Dendritic cell treated with granulocyte-macrophage colony-stimulating factor and Interleukin-4, amounts not matched to agents 40 ng/mL and 50 ng/mL, for 4 days (primary cell): ENCODE measurements at regions of chr20 and their contacts with region 1.

Region 1: DNA sequence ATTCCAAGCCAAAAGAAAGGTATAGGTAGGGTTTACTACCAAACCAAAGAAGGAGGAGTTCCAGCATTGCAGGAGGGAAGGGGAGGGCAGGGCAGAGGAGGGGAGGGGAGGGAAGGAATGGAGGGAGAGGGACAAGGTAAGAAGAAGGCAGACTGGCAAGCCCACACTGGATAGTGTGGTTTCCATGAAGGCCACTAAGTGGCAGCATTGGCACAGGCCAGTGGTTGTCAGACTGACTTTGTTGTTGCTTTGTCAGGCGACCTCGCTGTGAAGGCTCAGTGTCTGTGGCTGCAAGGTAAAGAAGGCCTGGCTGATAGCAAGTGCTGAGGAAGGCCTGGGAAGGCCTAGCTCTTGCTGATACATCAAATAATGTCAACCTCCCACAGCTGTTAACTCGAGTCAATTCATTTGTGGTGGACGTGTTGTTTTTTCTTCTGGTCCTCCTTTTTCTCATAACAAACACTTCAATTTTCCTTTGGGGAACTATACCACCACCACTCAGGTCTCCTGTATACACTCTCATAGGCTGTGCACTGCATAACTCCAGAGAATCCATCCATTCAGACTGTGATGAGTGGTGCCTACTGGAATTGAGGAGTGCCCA is 7.7 kb upstream of the ZNF334 start:
- H3K4me3 Mint-ChIP-seq: no peak overlapping the region
- H3K27ac Mint-ChIP-seq: no peak overlapping the region
- H3K4me1 Mint-ChIP-seq: no peaks in the 10 kb centered on the region
- H3K27me3 Mint-ChIP-seq: peaks cover 18% of the 10 kb centered on the region

Region 2: DNA sequence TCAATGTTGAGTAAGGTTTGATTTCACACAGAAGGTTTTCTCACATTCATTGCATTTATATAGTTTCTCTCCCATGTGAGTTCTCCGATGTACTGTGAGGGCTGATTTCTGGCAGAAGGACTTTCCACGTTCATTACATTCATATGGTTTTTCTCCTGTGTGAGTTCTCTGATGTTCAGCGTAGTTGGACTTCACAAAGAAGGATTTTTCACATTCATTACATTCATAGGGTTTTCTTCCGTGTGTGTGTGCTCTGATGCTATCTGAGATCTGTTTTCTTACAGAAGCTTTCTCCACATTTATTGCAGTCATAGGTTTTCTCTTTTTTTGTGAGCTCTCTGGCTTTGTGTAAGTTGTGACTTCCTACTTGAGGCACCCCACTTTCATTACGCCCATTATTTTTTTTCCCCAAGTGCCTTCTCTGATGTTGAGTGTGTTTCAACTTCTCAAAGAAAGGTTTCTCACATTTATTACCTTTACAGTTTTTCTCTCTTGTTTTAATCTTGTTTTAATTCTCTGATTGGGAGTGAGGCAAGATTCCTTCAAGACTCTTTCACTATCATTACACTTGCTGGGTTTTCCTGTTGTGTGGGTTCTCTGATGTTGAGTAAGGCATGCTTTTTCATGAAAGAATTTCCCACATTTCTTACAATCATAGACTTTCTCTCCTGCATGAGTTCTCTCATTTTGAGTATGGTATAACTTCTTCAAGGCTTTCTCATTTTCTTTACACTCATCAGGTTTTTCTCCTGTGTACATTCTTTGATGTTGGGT is 64.6 kb before region 1 on chr20:
- intact Hi-C with region 1: no loop called
- H3K4me3 Mint-ChIP-seq: no peak overlapping the region
- H3K27ac Mint-ChIP-seq: no peak overlapping the region
- H3K4me1 Mint-ChIP-seq: peaks cover 6% of the 10 kb centered on the region
- H3K27me3 Mint-ChIP-seq: peaks cover 27% of the 10 kb centered on the region

Region 3: DNA sequence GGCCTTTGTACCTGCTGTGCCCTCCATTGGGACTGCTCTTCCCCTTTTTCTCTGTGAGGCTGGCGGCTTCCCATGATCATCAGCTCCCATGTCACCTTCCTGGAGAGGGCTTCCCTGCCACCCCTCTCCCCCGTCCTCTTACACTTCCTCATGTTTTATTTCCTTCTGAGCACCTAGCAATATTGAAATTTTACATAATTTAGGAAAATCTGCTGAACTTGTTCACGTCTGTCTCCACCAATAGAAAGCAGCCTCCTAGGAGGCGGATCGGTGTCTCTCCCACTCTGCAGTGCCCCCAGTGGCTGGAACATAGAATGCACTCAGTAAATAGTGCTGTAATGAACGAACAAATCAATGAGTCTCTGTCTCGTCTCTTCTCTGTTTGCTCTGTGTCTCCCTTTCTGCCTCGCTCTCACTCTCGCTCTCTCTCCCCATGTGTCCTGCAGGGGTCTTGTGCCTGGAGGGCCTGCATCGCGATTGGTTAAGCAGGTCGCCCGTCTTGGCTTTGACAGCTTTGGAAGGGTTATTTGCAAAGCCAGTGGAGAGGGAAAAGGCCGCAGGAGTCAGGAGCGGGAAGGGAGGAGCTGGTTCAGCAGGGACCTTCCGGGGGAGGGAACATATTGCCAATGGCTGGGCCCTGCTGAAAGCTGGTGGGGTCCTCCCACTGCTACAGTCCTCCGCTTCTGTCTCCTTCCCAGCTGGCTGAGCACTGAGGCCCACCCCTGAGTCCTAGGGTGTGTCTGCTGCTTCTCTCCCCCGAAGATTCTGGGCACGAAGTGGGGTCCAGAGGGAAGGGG is 41.5 kb after region 1 on chr20:
- intact Hi-C with region 1: loop called (anchors 1 kb)
- H3K4me3 Mint-ChIP-seq: no peak overlapping the region
- H3K27ac Mint-ChIP-seq: no peak overlapping the region
- H3K4me1 Mint-ChIP-seq: peaks cover 18% of the 10 kb centered on the region
- H3K27me3 Mint-ChIP-seq: peaks cover 13% of the 10 kb centered on the region

Region 4: DNA sequence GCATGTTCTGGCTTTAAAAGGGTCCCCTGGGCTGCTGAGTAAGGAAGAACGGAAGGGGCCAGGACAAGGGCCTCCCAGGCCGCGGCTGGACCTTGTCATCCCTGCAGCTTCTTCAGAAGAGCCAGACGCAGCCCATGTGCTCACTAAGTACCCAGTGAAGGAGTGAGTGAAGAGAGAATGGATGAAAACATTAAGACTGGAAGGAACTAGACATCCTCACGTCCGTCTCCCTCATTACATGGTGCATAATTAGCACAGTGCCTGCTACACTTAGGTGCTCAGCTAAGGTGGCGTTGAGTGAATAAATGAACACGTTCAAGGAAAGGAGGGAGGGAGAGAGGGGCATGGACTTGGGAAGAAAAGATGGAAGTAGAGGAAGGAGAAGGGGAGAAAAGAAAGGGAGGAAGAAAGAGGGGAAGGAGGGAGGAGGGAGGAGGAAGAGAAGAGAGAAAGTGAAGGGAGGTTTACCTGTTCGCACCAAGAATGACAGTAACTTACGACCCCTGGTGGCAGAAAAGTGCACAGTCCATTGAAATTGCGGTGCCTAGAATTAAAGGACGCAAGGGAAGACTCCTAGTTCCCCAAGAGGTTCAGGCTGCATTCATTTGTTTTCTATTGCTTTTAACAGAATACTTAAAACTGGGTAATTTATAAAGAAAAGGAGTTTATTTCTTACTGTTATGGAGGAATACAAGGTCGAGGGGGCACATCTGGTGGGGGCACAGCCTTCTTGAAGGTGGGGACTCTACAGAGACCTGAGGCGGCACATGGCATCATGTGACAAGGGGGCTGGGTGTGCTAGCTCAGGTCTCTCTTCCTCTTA is 160.2 kb after region 1 on chr20:
- intact Hi-C with region 1: loop called (anchors 1 kb)
- H3K4me3 Mint-ChIP-seq: no peak overlapping the region
- H3K27ac Mint-ChIP-seq: no peak overlapping the region
- H3K4me1 Mint-ChIP-seq: peaks cover 38% of the 10 kb centered on the region
- H3K27me3 Mint-ChIP-seq: peaks cover 1% of the 10 kb centered on the region

Region 5: DNA sequence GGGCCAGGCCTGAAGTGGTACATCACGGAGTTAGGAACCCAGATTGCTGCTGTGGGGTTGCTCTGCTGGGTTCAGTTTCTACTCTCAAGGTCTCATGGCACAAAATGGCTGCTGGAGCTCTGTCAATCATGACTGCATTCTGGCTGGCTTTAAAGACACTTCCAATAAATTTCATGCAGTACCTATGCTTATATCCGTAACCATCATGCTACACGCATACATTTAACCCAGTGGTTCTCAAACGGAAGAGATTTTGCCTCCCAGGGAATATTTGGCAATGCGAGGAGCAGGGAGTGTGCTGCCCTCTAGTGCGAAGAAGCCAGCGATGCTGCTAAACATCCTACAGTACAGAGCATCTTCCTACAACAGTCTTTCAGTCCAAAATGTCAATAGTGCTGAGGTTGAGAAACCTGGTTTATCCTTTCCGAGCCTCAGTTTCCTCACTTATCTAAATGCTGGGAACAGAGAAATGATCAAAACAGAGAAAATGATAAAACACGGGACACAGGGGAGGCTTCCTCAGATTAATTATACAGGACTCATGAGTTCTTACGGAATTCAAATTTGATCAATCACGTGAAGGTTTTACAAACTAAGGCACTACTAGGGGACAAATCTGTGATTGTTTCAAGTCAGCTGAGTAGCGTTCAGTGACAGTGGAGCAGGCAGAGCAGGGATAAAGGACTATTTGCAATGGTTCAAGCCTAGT is 178.7 kb after region 1 on chr20:
- intact Hi-C with region 1: loop called (anchors 1 kb)
- H3K4me3 Mint-ChIP-seq: no peak overlapping the region
- H3K27ac Mint-ChIP-seq: no peak overlapping the region
- H3K4me1 Mint-ChIP-seq: peaks cover under 1% of the 10 kb centered on the region
- H3K27me3 Mint-ChIP-seq: peaks cover 3% of the 10 kb centered on the region

Region 6: GRCh38 chr20:46715292-46715756 is 194.2 kb after region 1 on chr20:
- intact Hi-C with region 1: no loop called
- H3K4me3 Mint-ChIP-seq: no peak overlapping the region
- H3K27ac Mint-ChIP-seq: no peak overlapping the region
- H3K4me1 Mint-ChIP-seq: peaks cover 9% of the 10 kb centered on the region
- H3K27me3 Mint-ChIP-seq: peaks cover 3% of the 10 kb centered on the region